Aorta (tissue), 5 donors: ENCODE measurements at regions of chr15 and their contacts with region 1.

Region 1: GRCh38 chr15:26001201-26001600 is 138.1 kb upstream of the ATP10A start:
- DNase-seq: no peak
- ATAC-seq: no peak
- H3K4me3 ChIP-seq: no peak overlapping the region
- H3K27ac ChIP-seq: no peak overlapping the region
- H3K4me1 ChIP-seq: no peaks in the 10 kb centered on the region
- H3K27me3 ChIP-seq: no peaks in the 10 kb centered on the region

Region 2: DNA sequence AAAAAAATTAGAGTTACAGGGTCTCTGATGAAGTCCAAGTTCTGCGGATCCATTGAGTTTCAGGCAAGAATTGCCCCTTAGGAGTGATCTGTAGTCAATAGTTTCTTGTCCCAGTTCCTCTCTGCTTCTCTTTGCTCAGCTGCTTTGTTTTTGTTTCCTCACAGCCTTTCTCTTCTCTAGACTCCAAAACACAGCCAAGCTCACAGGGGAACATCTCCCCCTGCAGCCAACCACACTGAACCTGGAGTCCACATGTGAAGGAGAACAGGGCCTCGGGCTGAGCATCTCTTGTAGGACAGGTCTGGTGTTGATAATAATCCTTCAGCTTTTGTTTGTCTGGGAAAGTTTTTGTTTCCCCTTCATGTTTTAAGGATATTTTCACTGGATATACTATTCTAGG is 64.5 kb after region 1 on chr15:
- intact Hi-C with region 1: loop called in 1 of 2 experiments (anchors 10 kb)
- DNase-seq: no peak
- ATAC-seq: no peak
- H3K4me3 ChIP-seq: no peak overlapping the region
- H3K27ac ChIP-seq: no peak overlapping the region
- H3K4me1 ChIP-seq: no peaks in the 10 kb centered on the region
- H3K27me3 ChIP-seq: peaks cover 0 to 2% of the 10 kb centered on the region in 2 donors